Endothelial cell of umbilical vein (primary cell): ENCODE measurements at regions of chr3 and their contacts with region 1.

Region 1: DNA sequence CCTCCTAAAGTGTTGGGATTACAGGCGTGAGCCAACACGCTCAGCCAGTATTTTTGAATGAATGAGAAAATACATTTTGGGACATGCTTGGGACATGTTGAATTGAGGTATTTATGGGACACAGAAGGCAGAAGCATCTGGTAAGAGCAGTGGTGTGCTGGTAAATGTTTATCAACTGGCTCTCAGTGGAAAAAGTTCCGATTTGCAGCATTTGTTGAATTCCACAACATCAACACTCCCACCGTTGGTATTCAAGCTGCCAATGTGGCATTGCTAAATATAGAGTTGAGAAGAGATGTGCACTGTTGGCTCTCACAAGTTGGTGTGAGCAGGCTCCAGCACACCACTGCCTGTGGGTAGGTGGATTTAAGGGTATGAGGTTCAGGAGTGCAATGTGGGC is 35.8 kb upstream of the LRRFIP2 start:
- DNase-seq: no peak
- H3K4me3 ChIP-seq: no peak overlapping the region
- H3K27ac ChIP-seq: no peak overlapping the region
- H3K4me1 ChIP-seq: no peaks in the 10 kb centered on the region
- H3K27me3 ChIP-seq: no peaks in the 10 kb centered on the region
- CTCF ChIP-seq: no peak
- POLR2A ChIP-seq: no peak

Region 2: GRCh38 chr3:36729204-36730056 is 480.8 kb before region 1 on chr3:
- CTCF ChIA-PET with region 1: no interaction called
- POLR2A ChIA-PET with region 1: no interaction called
- dilution Hi-C with region 1: no loop called
- intact Hi-C with region 1: loop called (anchors 1 kb)
- DNase-seq: peak; percentile 50
- H3K4me3 ChIP-seq: no peak overlapping the region
- H3K27ac ChIP-seq: no peak overlapping the region
- H3K4me1 ChIP-seq: no peaks in the 10 kb centered on the region
- H3K27me3 ChIP-seq: no peaks in the 10 kb centered on the region
- CTCF ChIP-seq: peak; percentile 36 to 43
- POLR2A ChIP-seq: no peak

Region 3: DNA sequence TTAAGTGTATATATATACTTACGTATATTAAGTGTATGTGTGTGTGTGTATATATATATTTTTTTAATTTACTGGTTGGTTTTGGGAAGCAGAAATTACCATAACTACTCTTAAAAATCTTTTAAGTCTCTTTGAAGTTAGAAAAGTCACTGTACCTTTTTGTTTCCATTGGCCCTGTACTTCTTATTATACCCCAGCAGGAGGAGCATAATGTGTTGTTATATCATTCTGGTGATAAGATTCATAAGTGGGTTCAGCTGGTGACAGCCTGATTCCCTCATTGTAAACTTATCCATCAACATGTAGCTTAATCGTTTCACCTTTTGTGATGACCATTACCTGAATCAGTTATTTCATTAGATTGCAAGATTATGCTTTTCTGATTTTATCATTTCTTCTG is 186.1 kb before region 1 on chr3:
- CTCF ChIA-PET with region 1: interaction called, 141 read pairs
- POLR2A ChIA-PET with region 1: no interaction called
- dilution Hi-C with region 1: no loop called
- intact Hi-C with region 1: loop called (anchors 1 kb)
- DNase-seq: peak; percentile 46
- H3K4me3 ChIP-seq: no peak overlapping the region
- H3K27ac ChIP-seq: no peak overlapping the region
- H3K4me1 ChIP-seq: no peaks in the 10 kb centered on the region
- H3K27me3 ChIP-seq: no peaks in the 10 kb centered on the region
- CTCF ChIP-seq: peak; percentile 11 to 32
- POLR2A ChIP-seq: no peak

Region 4: GRCh38 chr3:37056826-37057225 is 153.4 kb before region 1 on chr3:
- CTCF ChIA-PET with region 1: no interaction called
- POLR2A ChIA-PET with region 1: no interaction called
- dilution Hi-C with region 1: no loop called
- intact Hi-C with region 1: loop called (anchors 5 kb)
- DNase-seq: no peak
- H3K4me3 ChIP-seq: no peak overlapping the region
- H3K27ac ChIP-seq: no peak overlapping the region
- H3K4me1 ChIP-seq: peaks cover 16% of the 10 kb centered on the region
- H3K27me3 ChIP-seq: no peaks in the 10 kb centered on the region
- CTCF ChIP-seq: no peak
- POLR2A ChIP-seq: no peak

Region 5: GRCh38 chr3:37338500-37338899 is 128.3 kb after region 1 on chr3:
- CTCF ChIA-PET with region 1: no interaction called
- POLR2A ChIA-PET with region 1: no interaction called
- dilution Hi-C with region 1: no loop called
- intact Hi-C with region 1: no loop called
- DNase-seq: no peak
- H3K4me3 ChIP-seq: no peak overlapping the region
- H3K27ac ChIP-seq: no peak overlapping the region
- H3K4me1 ChIP-seq: no peaks in the 10 kb centered on the region
- H3K27me3 ChIP-seq: no peaks in the 10 kb centered on the region
- CTCF ChIP-seq: no peak
- POLR2A ChIP-seq: no peak